CD4-positive, alpha-beta T cell (primary cell): ENCODE measurements at regions of chr3 and their contacts with region 1.

Region 1: DNA sequence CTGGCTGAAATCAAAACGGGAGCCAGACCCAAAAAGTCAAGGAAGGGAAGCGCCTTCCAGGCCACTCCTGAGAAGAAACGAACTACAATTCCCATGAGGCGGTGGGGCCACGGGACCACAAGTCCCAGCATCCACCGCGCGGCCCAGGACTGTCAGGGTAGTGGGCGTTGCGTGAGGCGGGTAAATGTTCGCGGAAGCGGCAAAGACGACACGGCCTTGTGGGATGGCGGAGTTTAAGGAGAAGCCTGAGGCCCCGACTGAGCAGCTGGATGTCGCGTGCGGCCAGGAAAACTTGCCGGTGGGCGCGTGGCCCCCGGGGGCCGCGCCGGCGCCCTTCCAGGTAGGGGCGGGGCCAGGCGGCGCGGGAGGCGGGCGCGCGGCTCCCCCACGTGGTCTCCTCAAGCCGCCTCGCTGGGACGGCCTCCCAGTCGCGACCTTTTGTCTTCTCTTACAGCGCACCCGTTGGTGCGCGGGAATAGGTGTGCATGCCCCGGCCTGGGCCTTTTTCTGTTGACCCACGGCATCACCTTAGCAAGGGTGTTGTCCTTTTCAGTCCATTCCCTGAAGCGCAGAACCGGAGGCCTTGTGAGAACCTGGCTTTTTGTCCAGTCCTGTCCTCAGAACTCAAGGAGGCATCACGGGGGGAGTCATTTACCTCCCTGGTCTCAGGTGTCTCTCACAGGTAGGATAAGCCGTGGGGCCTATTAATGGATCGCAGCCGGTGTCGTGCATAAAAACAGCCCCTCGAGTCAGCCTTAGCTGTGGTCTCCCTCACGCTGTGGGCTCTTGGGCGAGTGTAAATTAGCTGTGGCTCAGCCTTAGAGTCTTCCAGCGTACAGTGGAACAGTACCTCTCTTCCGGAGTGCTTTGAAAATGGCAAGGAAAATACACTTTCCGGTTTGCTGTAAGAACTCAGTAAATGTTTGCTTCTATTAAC is at the start of gene SETMAR:
- DNase-seq: peak; percentile 69 to 90 (median 78)
- ATAC-seq: peak; percentile 92
- H3K4me3 ChIP-seq: peak within 1 kb of the TSS; percentile 83
- H3K4me3 Mint-ChIP-seq: peak within 1 kb of the TSS; percentile 95
- H3K27ac ChIP-seq: peak within 1 kb of the TSS; percentile 80 to 89
- H3K27ac Mint-ChIP-seq: peak within 1 kb of the TSS; percentile 94
- H3K4me1 ChIP-seq: peaks cover 20% of the 10 kb centered on the region
- H3K4me1 Mint-ChIP-seq: peaks cover 41% of the 10 kb centered on the region
- H3K27me3 ChIP-seq: no peaks in the 10 kb centered on the region
- H3K27me3 Mint-ChIP-seq: no peaks in the 10 kb centered on the region
- CTCF ChIP-seq: no peak
- total RNA-seq, gene SETMAR: 9.1 to 9.2 TPM

Region 2: DNA sequence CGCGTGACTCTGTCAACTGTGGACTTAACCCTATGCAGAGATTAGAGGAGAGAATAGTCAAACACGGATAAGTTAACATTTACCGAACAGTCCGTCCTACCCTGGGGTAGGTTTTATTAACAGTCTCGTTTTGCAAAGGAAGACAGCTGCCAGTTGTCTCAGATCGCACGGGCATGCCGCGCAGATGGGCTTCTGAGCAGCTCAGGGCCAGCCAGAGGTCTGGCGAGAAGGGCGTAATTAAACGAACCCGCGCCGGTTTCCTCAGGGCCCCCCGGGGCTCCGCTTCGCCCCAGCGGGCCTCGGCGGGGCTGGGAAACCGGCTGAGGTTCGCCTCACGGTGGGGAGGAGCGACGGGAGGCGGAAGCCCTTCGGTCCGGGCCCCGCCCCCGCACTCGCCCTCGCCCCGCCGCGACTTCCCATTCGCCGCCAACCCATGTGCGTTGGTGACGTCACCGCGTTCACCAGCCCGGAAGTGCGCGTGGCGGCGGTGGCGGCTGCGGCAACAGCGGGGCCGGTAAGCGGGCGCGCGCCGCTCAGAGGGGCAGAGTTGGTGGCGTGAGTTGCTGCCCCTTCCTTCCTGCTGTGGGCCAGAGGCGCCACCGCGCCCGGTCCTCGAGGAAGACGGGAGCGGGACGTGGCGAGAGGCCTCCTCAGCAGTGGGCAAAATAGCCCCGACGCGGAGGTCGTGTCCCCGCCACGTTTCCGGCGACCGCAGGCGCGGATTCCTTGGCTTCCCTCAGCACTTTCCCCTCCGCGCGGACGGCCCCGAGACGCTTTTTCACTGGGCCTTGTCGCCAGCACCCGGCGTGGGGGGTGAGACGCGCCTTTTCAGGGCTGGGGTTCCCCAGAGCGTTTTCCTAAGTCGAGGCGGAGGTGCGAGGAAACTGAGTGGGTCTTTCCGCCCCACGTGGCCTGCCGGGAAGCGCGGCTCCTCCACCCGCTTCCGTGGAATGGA is 1176.7 kb before region 1 on chr3 and contains the start of gene TRNT1:
- CTCF ChIA-PET with region 1: no interaction called
- POLR2A ChIA-PET with region 1: no interaction called
- intact Hi-C with region 1: loop called in 1 of 2 experiments (anchors 2 kb)
- DNase-seq: peak; percentile 93 to 99 (median 96)
- ATAC-seq: peak; percentile 94
- H3K4me3 ChIP-seq: peak within 1 kb of the TSS; percentile 94
- H3K4me3 Mint-ChIP-seq: peak within 1 kb of the TSS; percentile 91
- H3K27ac ChIP-seq: peak within 1 kb of the TSS; percentile 92 to 98
- H3K27ac Mint-ChIP-seq: peak within 1 kb of the TSS; percentile 96
- H3K4me1 ChIP-seq: peaks cover 35% of the 10 kb centered on the region
- H3K4me1 Mint-ChIP-seq: peaks cover 47% of the 10 kb centered on the region
- H3K27me3 ChIP-seq: no peaks in the 10 kb centered on the region
- H3K27me3 Mint-ChIP-seq: no peaks in the 10 kb centered on the region
- CTCF ChIP-seq: no peak
- total RNA-seq, gene TRNT1: 25.8 to 30.7 TPM

Region 3: DNA sequence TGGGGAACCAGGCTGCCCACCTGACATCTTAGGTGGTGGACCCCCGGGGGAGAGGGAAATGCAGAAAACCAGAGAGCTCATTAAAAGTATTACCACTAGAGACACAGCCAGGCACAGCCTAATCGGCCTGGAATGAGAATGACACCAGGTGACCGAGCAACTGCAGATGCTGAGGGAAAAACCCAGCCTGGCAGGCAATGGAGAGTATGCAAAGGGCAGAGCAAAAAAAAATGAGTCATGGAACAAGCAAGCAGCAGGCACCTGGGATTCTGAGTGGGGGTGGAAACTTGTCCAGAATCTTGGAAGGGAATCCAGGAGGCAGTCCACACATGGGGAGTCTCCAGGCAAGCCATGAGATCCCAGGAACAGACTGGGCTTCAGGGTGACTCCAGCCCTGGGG is 687.9 kb before region 1 on chr3:
- CTCF ChIA-PET with region 1: no interaction called
- POLR2A ChIA-PET with region 1: no interaction called
- intact Hi-C with region 1: no loop called
- DNase-seq: no peak
- ATAC-seq: no peak
- H3K4me3 ChIP-seq: no peak overlapping the region
- H3K4me3 Mint-ChIP-seq: no peak overlapping the region
- H3K27ac ChIP-seq: no peak overlapping the region
- H3K27ac Mint-ChIP-seq: no peak overlapping the region
- H3K4me1 ChIP-seq: no peaks in the 10 kb centered on the region
- H3K4me1 Mint-ChIP-seq: no peaks in the 10 kb centered on the region
- H3K27me3 ChIP-seq: no peaks in the 10 kb centered on the region
- H3K27me3 Mint-ChIP-seq: no peaks in the 10 kb centered on the region
- CTCF ChIP-seq: no peak

Region 4: DNA sequence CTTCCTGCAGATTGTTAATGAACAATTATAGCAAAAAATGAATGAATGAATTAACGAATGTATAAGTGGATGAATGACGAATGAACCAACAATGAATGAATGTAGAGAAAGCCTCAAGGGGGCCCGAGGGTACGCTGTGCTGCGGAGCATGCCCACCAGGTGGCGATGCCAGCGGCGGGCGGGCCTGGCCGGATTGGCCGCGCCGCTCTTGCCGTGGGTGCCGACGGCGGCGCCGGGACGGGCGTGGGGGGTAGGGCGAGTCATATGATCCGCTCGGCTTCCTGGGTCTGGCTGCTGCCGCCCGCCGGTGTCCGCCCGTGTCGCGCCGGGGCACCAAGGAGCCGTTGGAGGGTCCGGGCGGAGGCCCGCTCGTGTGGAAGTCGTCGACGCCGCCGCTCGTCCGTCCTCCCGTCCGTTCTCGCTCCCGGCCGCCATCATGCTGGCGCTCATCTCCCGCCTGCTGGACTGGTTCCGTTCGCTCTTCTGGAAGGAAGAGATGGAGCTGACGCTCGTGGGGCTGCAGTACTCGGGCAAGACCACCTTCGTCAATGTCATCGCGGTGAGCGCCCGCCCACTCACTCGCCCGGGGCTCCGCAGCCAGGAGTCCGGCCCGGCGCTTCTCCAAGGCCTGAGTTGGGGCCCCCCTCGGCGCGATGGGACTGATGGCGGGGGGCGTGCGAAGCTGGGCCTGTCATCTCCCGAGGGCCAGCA is 818.7 kb after region 1 on chr3 and contains the start of gene ARL8B:
- CTCF ChIA-PET with region 1: no interaction called
- POLR2A ChIA-PET with region 1: no interaction called
- intact Hi-C with region 1: loop called in 1 of 2 experiments (anchors 5 kb)
- DNase-seq: peak; percentile 83 to 94 (median 90)
- ATAC-seq: peak; percentile 99
- H3K4me3 ChIP-seq: peak within 1 kb of the TSS; percentile 94
- H3K4me3 Mint-ChIP-seq: peak within 1 kb of the TSS; percentile 87
- H3K27ac ChIP-seq: peak within 1 kb of the TSS; percentile 79 to 86
- H3K27ac Mint-ChIP-seq: peak within 1 kb of the TSS; percentile 87
- H3K4me1 ChIP-seq: peaks cover 36% of the 10 kb centered on the region
- H3K4me1 Mint-ChIP-seq: peaks cover 50% of the 10 kb centered on the region
- H3K27me3 ChIP-seq: no peaks in the 10 kb centered on the region
- H3K27me3 Mint-ChIP-seq: no peaks in the 10 kb centered on the region
- CTCF ChIP-seq: peak; percentile 97
- total RNA-seq, gene ARL8B: 48.5 to 49.7 TPM

Region 5: GRCh38 chr3:5187156-5187919 is 883.9 kb after region 1 on chr3 and contains the start of gene EDEM1:
- CTCF ChIA-PET with region 1: no interaction called
- POLR2A ChIA-PET with region 1: no interaction called
- intact Hi-C with region 1: loop called in 1 of 2 experiments (anchors 5 kb)
- DNase-seq: peak; percentile 77 to 98 (median 94)
- ATAC-seq: peak; percentile 76
- H3K4me3 ChIP-seq: peak within 1 kb of the TSS; percentile 94
- H3K4me3 Mint-ChIP-seq: peak within 1 kb of the TSS; percentile 98
- H3K27ac ChIP-seq: peak within 1 kb of the TSS; percentile 89 to 94
- H3K27ac Mint-ChIP-seq: peak within 1 kb of the TSS; percentile 98
- H3K4me1 ChIP-seq: peaks cover 25% of the 10 kb centered on the region
- H3K4me1 Mint-ChIP-seq: peaks cover 39% of the 10 kb centered on the region
- H3K27me3 ChIP-seq: no peaks in the 10 kb centered on the region
- H3K27me3 Mint-ChIP-seq: no peaks in the 10 kb centered on the region
- CTCF ChIP-seq: no peak
- total RNA-seq, gene EDEM1: 106 to 114 TPM